T-cell (primary cell): ENCODE measurements at regions of chr7 and their contacts with region 1.

Region 1: GRCh38 chr7:149871576-149871975 is 2.2 kb upstream of the ATP6V0E2 start:
- DNase-seq: peak in 1 of 35 experiments; percentile 37
- ATAC-seq: no peak
- H3K4me3 ChIP-seq: peak overlapping the region in 1 of 2 donors; percentile 29
- H3K4me3 Mint-ChIP-seq: peak overlapping the region; percentile 43 to 86 (median 81)
- H3K27ac ChIP-seq: peak overlapping the region; percentile 89
- H3K27ac Mint-ChIP-seq: peak overlapping the region; percentile 99
- H3K4me1 ChIP-seq: peaks cover 71 to 86% of the 10 kb centered on the region in 2 experiments
- H3K4me1 Mint-ChIP-seq: peaks cover 85 to 88% (median 86%) of the 10 kb centered on the region in 3 donors
- H3K27me3 ChIP-seq: no peaks in the 10 kb centered on the region
- H3K27me3 Mint-ChIP-seq: no peaks in the 10 kb centered on the region

Region 2: DNA sequence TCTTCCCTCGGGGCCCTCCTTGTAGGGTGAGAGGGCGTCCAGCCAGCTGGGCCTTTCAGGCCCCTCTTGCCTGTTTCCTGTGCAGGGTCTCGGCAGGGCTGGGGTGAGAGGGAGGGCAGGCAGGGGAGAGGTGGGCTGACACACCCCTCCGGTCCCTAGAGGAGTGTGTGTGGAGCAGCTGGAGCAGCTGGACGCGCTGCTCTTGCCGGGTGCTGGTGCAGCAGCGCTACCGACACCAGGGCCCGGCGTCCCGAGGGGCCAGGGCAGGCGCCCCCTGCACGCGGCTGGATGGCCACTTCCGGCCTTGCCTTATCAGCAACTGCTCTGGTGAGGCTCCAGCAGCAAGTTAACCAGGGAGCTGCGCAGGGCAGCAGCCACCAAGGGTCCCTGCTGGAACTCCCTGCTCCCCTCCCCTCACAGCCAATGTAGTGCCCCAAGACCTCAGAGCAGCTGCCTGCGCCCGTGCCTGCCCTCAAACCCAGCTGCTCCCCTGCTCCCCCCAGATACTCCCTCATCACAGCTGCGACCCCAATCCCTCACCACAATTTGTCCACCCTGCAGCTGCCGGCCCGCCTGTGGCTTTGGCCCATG is 49.1 kb before region 1 on chr7:
- CTCF ChIA-PET with region 1: no interaction called
- POLR2A ChIA-PET with region 1: no interaction called
- DNase-seq: no peak
- ATAC-seq: no peak
- H3K4me3 ChIP-seq: no peak overlapping the region
- H3K4me3 Mint-ChIP-seq: no peak overlapping the region
- H3K27ac ChIP-seq: no peak overlapping the region
- H3K27ac Mint-ChIP-seq: no peak overlapping the region
- H3K4me1 ChIP-seq: no peaks in the 10 kb centered on the region
- H3K4me1 Mint-ChIP-seq: peaks cover 0 to under 1% (median 0%) of the 10 kb centered on the region in 3 donors
- H3K27me3 ChIP-seq: peaks cover 0 to 8% of the 10 kb centered on the region in 2 experiments
- H3K27me3 Mint-ChIP-seq: no peaks in the 10 kb centered on the region

Region 3: DNA sequence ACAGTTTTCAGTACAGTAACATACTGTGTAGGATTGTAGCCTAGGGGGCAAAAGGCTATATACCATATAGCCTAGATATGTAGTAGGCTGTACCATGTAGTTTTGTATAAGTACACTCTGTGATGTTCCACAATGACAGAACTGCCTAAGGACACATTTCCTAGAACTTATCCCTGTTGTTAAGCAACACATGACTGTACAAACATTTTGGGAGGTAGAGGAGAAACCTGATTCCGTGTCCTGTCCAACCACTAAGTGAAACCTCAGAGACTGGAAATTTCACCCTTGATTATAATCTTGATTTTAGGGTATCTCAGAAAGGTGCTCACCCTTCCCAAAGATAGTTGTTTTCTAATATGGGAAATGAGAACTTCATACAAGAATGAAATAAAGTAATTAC is 30.9 kb before region 1 on chr7:
- CTCF ChIA-PET with region 1: interaction called, 3 to 7 read pairs
- POLR2A ChIA-PET with region 1: interaction called, 6 to 11 read pairs
- DNase-seq: no peak
- ATAC-seq: no peak
- H3K4me3 ChIP-seq: no peak overlapping the region
- H3K4me3 Mint-ChIP-seq: peak overlapping the region; percentile 11 to 66 (median 40)
- H3K27ac ChIP-seq: no peak overlapping the region
- H3K27ac Mint-ChIP-seq: no peak overlapping the region
- H3K4me1 ChIP-seq: peaks cover 21 to 24% of the 10 kb centered on the region in 2 experiments
- H3K4me1 Mint-ChIP-seq: peaks cover 58 to 69% (median 66%) of the 10 kb centered on the region in 3 donors
- H3K27me3 ChIP-seq: no peaks in the 10 kb centered on the region
- H3K27me3 Mint-ChIP-seq: no peaks in the 10 kb centered on the region

Region 4: GRCh38 chr7:151291206-151291605 is 1419.6 kb after region 1 on chr7:
- CTCF ChIA-PET with region 1: no interaction called
- POLR2A ChIA-PET with region 1: interaction called in 1 of 2 experiments, 10 read pairs
- DNase-seq: no peak
- ATAC-seq: no peak
- H3K4me3 ChIP-seq: no peak overlapping the region
- H3K4me3 Mint-ChIP-seq: no peak overlapping the region
- H3K27ac ChIP-seq: no peak overlapping the region
- H3K27ac Mint-ChIP-seq: no peak overlapping the region
- H3K4me1 ChIP-seq: peaks cover 0 to 2% of the 10 kb centered on the region in 2 experiments
- H3K4me1 Mint-ChIP-seq: no peaks in the 10 kb centered on the region
- H3K27me3 ChIP-seq: peaks cover 0 to 7% of the 10 kb centered on the region in 2 experiments
- H3K27me3 Mint-ChIP-seq: peaks cover 0 to 10% of the 10 kb centered on the region in 2 donors